Calu3 (cell line): ENCODE measurements at regions of chrX and their contacts with region 1.

Region 1: DNA sequence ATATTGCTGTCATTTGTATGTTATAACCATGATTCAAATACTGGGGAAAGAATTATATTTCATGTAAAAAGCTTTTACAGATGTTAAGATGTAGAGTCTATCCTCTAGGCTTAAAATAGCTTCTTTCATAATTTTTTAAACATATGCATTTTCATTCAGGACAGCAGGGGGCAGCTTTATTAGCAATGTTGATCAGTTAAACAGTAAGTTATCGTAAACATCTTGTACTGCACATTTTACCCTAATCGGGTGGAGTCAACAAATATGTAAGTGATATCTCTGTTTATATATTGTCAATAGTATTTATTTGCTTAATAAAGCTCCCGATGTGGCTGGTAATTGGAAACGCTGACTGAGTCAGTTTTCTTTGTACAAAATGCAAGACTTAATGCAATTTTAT is 142.5 kb upstream of the MED14 start:
- DNase-seq: peak; percentile 8
- H3K4me3 Mint-ChIP-seq: no peak overlapping the region
- H3K27ac Mint-ChIP-seq: no peak overlapping the region
- H3K4me1 Mint-ChIP-seq: no peaks in the 10 kb centered on the region
- H3K27me3 Mint-ChIP-seq: no peaks in the 10 kb centered on the region
- CTCF ChIP-seq: peak; percentile 27

Region 2: GRCh38 chrX:40922307-40922706 is 44.4 kb after region 1 on chrX:
- CTCF ChIA-PET with region 1: no interaction called
- intact Hi-C with region 1: loop called (anchors 2 kb)
- DNase-seq: peak; percentile 32
- H3K4me3 Mint-ChIP-seq: no peak overlapping the region
- H3K27ac Mint-ChIP-seq: no peak overlapping the region
- H3K4me1 Mint-ChIP-seq: peaks cover 31% of the 10 kb centered on the region
- H3K27me3 Mint-ChIP-seq: no peaks in the 10 kb centered on the region
- CTCF ChIP-seq: peak; percentile 14